ENCODE measurements at regions of chr6 and their contacts with region 1.

Region 1: GRCh38 chr6:33248925-33249731 is 22.5 kb downstream of the VPS52 start:
- DNase-seq: peak; percentile 99
- ATAC-seq: peak; percentile 87
- H3K4me3 ChIP-seq: peak overlapping the region; percentile 64
- H3K27ac ChIP-seq: peak overlapping the region; percentile 95
- H3K4me1 ChIP-seq: peaks cover 12% of the 10 kb centered on the region
- H3K27me3 ChIP-seq: no peaks in the 10 kb centered on the region
- CTCF ChIP-seq: 0 out of 2 replicates have a peak, but pooled peaks have one; percentile 20
- POLR2A ChIP-seq: peak; percentile 88
- RAD21 ChIP-seq: no peak

Region 2: GRCh38 chr6:32885698-32886286 is 363.3 kb before region 1 on chr6:
- CTCF ChIA-PET with region 1: no interaction called
- POLR2A ChIA-PET with region 1: no interaction called
- dilution Hi-C with region 1: no loop called
- in situ Hi-C with region 1: no loop called
- intact Hi-C with region 1: loop called (anchors 5 kb)
- DNase-seq: peak; percentile 81
- ATAC-seq: peak; percentile 44; the same call in 1 of the 2 replicates
- H3K4me3 ChIP-seq: no peak overlapping the region
- H3K27ac ChIP-seq: no peak overlapping the region
- H3K4me1 ChIP-seq: peaks cover 15% of the 10 kb centered on the region
- H3K27me3 ChIP-seq: no peaks in the 10 kb centered on the region
- CTCF ChIP-seq: peak; percentile 76
- POLR2A ChIP-seq: no peak
- RAD21 ChIP-seq: peak; percentile 77

Region 3: DNA sequence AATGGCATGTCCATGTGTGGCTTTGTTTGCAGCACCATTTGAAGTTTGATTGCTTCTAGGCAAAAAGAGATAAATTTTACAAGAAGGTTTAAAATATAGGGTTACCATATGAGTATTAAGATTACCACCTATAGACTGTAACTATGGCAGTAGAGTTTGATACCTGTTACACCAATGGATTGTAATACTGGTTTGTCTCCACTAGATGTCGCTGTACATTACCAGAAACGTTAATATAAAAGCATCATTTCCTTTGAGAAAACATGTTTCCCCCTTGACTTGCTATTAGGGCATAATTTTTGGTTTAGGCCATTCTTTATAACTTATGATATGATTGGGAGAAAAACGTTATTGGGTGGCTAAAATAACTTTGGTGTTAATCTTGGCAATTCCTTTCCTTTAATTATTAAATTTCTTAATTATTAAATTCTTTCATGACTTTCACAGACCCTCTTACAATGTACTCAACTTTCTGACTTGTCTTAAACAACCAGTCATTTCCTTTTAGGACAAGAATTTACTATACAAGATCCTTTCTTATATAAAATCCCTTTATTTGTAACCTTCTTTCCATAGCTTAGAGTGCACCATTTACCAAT is 130.5 kb before region 1 on chr6:
- CTCF ChIA-PET with region 1: interaction called, 6 read pairs
- POLR2A ChIA-PET with region 1: no interaction called
- dilution Hi-C with region 1: no loop called
- in situ Hi-C with region 1: loop called (anchors 10 kb)
- intact Hi-C with region 1: loop called (anchors 1 kb)
- DNase-seq: peak; percentile 49
- ATAC-seq: peak; percentile 72
- H3K4me3 ChIP-seq: no peak overlapping the region
- H3K27ac ChIP-seq: no peak overlapping the region
- H3K4me1 ChIP-seq: no peaks in the 10 kb centered on the region; the same call in 1 of the 2 replicates
- H3K27me3 ChIP-seq: peaks cover 52% of the 10 kb centered on the region
- CTCF ChIP-seq: peak; percentile 65
- POLR2A ChIP-seq: no peak
- RAD21 ChIP-seq: peak; percentile 56

Region 4: GRCh38 chr6:33154349-33154748 is 94.8 kb before region 1 on chr6:
- CTCF ChIA-PET with region 1: interaction called, 6 read pairs
- POLR2A ChIA-PET with region 1: no interaction called
- dilution Hi-C with region 1: no loop called
- in situ Hi-C with region 1: no loop called
- intact Hi-C with region 1: loop called (anchors 2 kb)
- DNase-seq: no peak
- ATAC-seq: no peak
- H3K4me3 ChIP-seq: no peak overlapping the region
- H3K27ac ChIP-seq: no peak overlapping the region
- H3K4me1 ChIP-seq: no peaks in the 10 kb centered on the region
- H3K27me3 ChIP-seq: peaks cover 9% of the 10 kb centered on the region
- CTCF ChIP-seq: no peak
- POLR2A ChIP-seq: no peak
- RAD21 ChIP-seq: no peak

Region 5: DNA sequence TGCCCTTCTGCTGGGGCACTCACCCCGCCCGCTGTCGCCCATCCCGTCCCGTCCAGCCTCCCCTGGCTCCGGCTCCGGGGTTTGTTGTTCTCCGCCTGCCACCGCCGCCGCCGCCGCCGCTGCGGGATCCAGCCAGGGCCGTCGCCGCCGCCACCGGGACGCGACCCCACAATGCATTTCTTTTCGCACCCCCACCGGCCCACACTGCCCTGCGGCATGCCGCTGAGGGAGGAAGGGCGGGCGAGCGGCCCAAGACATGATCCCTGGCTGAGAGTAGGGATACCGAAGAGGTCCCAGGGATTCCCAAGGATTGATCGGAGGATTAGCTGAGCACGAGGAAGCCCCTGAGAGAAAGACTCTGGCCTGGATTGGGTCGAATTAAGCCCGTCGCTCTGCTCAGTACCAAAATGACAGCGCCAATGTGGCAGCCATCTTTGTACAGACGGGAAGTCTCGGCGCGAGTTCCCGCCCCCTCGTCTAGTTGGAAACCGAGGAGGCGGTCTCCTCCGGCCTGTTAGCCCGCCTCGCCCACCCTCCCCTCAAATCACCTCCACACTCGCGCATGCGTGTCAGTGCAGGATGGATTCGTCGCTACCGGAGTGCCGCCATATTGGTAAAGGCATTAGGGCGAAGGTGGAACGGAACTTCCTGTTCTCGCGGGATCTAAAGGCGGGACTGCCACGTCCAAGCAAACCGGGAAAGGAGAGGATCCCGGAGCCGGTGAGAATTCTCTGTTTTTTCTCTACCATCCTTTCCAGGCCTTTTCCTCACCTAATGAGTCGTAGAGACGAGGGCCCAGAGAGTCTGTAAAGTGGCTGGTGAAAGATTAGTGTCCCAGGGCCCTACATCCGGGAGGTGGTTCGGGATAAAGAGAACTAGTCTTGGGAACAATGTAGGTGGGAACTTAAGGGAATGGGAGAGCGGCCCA is 48.6 kb before region 1 on chr6 and contains the starts of genes RXRB and SLC39A7:
- CTCF ChIA-PET with region 1: no interaction called
- POLR2A ChIA-PET with region 1: no interaction called
- dilution Hi-C with region 1: no loop called
- in situ Hi-C with region 1: no loop called
- intact Hi-C with region 1: loop called (anchors 2 kb)
- DNase-seq: peak; percentile 99
- ATAC-seq: peak; percentile 77
- H3K4me3 ChIP-seq: peak within 1 kb of the TSS; percentile 73
- H3K27ac ChIP-seq: peak within 1 kb of the TSS; percentile 95
- H3K4me1 ChIP-seq: peaks cover 20% of the 10 kb centered on the region
- H3K27me3 ChIP-seq: no peaks in the 10 kb centered on the region
- CTCF ChIP-seq: no peak
- POLR2A ChIP-seq: peak; percentile 92
- RAD21 ChIP-seq: no peak
- total RNA-seq, gene RXRB: 16.7 and 18.6 TPM in 2 replicates
- total RNA-seq, gene SLC39A7: 134 and 135 TPM in 2 replicates

Region 6: GRCh38 chr6:33288921-33289748 is 40.0 kb after region 1 on chr6 and contains the starts of genes PFDN6 and WDR46:
- CTCF ChIA-PET with region 1: no interaction called
- POLR2A ChIA-PET with region 1: no interaction called
- dilution Hi-C with region 1: no loop called
- in situ Hi-C with region 1: no loop called
- intact Hi-C with region 1: no loop called
- DNase-seq: peak; percentile 88
- ATAC-seq: peak; percentile 97
- H3K4me3 ChIP-seq: peak within 1 kb of the TSS; percentile 84
- H3K27ac ChIP-seq: peak within 1 kb of the TSS; percentile 84
- H3K4me1 ChIP-seq: peaks cover 7% of the 10 kb centered on the region
- H3K27me3 ChIP-seq: no peaks in the 10 kb centered on the region
- CTCF ChIP-seq: no peak
- POLR2A ChIP-seq: 0 out of 2 replicates have a peak, but pooled peaks have one; percentile 15
- RAD21 ChIP-seq: no peak
- total RNA-seq, gene PFDN6: 24.4 and 41.7 TPM in 2 replicates
- total RNA-seq, gene WDR46: 68.9 and 73.8 TPM in 2 replicates

Region 7: DNA sequence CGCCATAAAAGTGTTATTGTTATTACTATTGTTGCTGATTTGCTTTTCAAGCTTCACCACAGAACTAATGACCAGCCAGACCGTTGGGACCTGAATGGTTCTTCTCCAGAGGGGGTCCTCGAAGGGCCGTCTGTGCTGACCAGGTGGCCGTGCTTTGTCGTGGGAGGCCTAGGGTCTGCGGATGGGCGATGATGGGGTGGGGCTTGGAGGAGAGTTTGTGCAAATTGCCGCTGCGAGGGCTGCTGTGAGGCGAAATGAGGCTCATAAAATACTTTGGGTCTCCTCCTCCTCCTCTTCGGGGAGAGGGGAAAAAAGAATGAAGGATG is 74.5 kb after region 1 on chr6:
- CTCF ChIA-PET with region 1: no interaction called
- POLR2A ChIA-PET with region 1: no interaction called
- dilution Hi-C with region 1: no loop called
- in situ Hi-C with region 1: no loop called
- intact Hi-C with region 1: no loop called
- DNase-seq: no peak
- ATAC-seq: no peak
- H3K4me3 ChIP-seq: peak overlapping the region; percentile 85
- H3K27ac ChIP-seq: peak overlapping the region; percentile 1; the same call in 1 of the 2 replicates
- H3K4me1 ChIP-seq: peaks cover 30% of the 10 kb centered on the region
- H3K27me3 ChIP-seq: no peaks in the 10 kb centered on the region
- CTCF ChIP-seq: no peak
- POLR2A ChIP-seq: no peak
- RAD21 ChIP-seq: no peak

Region 8: DNA sequence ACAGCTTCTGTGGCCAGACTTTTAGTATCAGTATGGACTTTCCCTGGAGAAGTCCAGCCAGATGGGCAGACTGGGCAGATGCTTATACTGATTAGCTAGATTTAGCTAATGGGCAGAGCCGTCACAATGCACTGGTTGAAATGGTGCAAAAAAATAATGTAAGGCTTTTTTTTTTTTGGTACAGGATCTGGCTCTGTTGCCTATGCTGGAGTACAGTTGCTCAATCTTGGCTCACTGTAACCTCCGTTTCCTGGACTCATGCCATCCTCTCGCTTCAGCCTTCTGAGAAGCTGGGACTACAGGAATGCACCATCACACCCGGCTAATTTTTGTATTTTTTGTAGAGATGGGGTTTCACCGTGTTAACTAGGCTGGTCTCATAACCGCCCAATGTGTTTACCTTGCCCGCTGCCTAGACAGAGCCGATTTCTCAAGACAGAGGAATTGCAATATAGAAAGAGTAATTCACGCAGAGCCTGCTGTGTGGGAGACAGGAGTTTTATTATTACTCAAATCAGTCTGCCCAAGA is 126.1 kb after region 1 on chr6:
- CTCF ChIA-PET with region 1: no interaction called
- POLR2A ChIA-PET with region 1: no interaction called
- dilution Hi-C with region 1: no loop called
- in situ Hi-C with region 1: no loop called
- intact Hi-C with region 1: no loop called
- DNase-seq: peak; percentile 84
- ATAC-seq: peak; percentile 78
- H3K4me3 ChIP-seq: no peak overlapping the region
- H3K27ac ChIP-seq: no peak overlapping the region
- H3K4me1 ChIP-seq: no peaks in the 10 kb centered on the region
- H3K27me3 ChIP-seq: peaks cover 2% of the 10 kb centered on the region; the same call in 1 of the 2 replicates
- CTCF ChIP-seq: no peak
- POLR2A ChIP-seq: no peak
- RAD21 ChIP-seq: no peak

Region 9: DNA sequence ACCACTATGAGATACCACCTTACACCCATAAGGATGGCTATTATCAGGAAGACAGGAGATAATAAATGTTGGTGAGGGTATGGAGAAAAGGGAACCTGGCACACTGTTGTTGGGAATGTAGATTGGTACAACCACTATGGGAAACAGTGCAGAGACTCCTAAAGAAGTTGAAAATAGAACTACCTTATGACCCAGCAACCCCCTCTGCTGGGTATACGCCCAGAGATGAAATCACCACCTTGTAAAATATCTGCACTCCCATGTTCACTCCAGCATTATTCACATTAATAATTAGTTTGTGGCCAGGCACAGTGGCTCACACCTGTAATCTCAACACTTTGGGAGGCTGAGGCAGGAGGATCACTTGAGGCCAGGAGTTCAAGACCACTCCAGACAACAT is 232.1 kb after region 1 on chr6:
- CTCF ChIA-PET with region 1: no interaction called
- POLR2A ChIA-PET with region 1: no interaction called
- dilution Hi-C with region 1: no loop called
- in situ Hi-C with region 1: no loop called
- intact Hi-C with region 1: no loop called
- DNase-seq: no peak
- ATAC-seq: no peak
- H3K4me3 ChIP-seq: no peak overlapping the region
- H3K27ac ChIP-seq: no peak overlapping the region
- H3K4me1 ChIP-seq: no peaks in the 10 kb centered on the region
- H3K27me3 ChIP-seq: peaks cover 5% of the 10 kb centered on the region
- CTCF ChIP-seq: no peak
- POLR2A ChIP-seq: no peak
- RAD21 ChIP-seq: no peak

Measured in IMR-90 (cell line).